ENCODE measurements at regions of chr19 and their contacts with region 1.

Region 1: DNA sequence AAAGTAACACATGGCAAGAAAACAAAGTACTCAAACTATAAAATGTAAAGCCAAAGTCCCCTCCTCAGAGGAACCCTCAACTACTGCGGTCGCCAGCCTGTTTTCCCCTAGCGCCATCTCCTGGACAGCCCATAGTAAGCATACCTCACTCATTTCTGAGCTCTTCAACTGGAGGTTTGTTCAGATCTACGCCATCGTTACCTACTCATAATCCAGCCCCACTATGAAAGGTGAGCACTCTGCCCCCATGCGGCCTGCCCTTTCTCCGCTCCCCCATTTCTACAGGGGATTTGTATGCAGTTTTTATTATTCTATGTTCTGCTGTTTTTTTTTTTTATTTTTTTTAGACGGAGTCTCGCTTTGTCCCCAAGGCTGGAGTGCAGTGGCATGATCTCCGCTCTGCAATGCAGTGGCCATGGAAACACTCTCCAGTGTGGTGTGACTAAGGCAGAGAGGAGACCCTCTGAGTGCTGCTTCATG is 26.2 kb downstream of the OPA3 start:
- DNase-seq: peak; percentile 40 to 89
- ATAC-seq: peak; percentile 90 to 98 (median 93)
- H3K4me3 ChIP-seq: no peak overlapping the region
- H3K4me3 Mint-ChIP-seq: no peak overlapping the region
- H3K27ac ChIP-seq: no peak overlapping the region
- H3K27ac Mint-ChIP-seq: no peak overlapping the region
- H3K4me1 ChIP-seq: peaks cover 18% of the 10 kb centered on the region
- H3K4me1 Mint-ChIP-seq: peaks cover 7 to 16% of the 10 kb centered on the region in 2 donors
- H3K27me3 ChIP-seq: no peaks in the 10 kb centered on the region
- H3K27me3 Mint-ChIP-seq: no peaks in the 10 kb centered on the region
- CTCF ChIP-seq: peak; percentile 52

Region 2: GRCh38 chr19:45496349-45496953 is 62.0 kb before region 1 on chr19:
- intact Hi-C with region 1: loop called (anchors 1 kb)
- DNase-seq: peak; percentile 53 to 69
- ATAC-seq: peak; percentile 32 to 50 (median 32)
- H3K4me3 ChIP-seq: peak overlapping the region; percentile 51
- H3K4me3 Mint-ChIP-seq: peak overlapping the region; percentile 75
- H3K27ac ChIP-seq: no peak overlapping the region
- H3K27ac Mint-ChIP-seq: peak overlapping the region in 1 of 2 donors; percentile 83
- H3K4me1 ChIP-seq: peaks cover 54% of the 10 kb centered on the region
- H3K4me1 Mint-ChIP-seq: peaks cover 34 to 58% of the 10 kb centered on the region in 2 donors
- H3K27me3 ChIP-seq: peaks cover 24% of the 10 kb centered on the region
- H3K27me3 Mint-ChIP-seq: peaks cover 10 to 34% of the 10 kb centered on the region in 2 donors
- CTCF ChIP-seq: no peak

Region 3: GRCh38 chr19:45523642-45524256 is 34.7 kb before region 1 on chr19:
- intact Hi-C with region 1: loop called (anchors 5 kb)
- DNase-seq: peak; percentile 70 to 90
- ATAC-seq: peak; percentile 99 to 100 (median 99)
- H3K4me3 ChIP-seq: no peak overlapping the region
- H3K4me3 Mint-ChIP-seq: no peak overlapping the region
- H3K27ac ChIP-seq: peak overlapping the region; percentile 13
- H3K27ac Mint-ChIP-seq: peak overlapping the region; percentile 75 to 78
- H3K4me1 ChIP-seq: peaks cover 19% of the 10 kb centered on the region
- H3K4me1 Mint-ChIP-seq: peaks cover 20 to 22% of the 10 kb centered on the region in 2 donors
- H3K27me3 ChIP-seq: no peaks in the 10 kb centered on the region
- H3K27me3 Mint-ChIP-seq: no peaks in the 10 kb centered on the region
- CTCF ChIP-seq: peak; percentile 75

Region 4: GRCh38 chr19:45574526-45574925 is 16.1 kb after region 1 on chr19:
- intact Hi-C with region 1: no loop called
- DNase-seq: no peak
- ATAC-seq: no peak
- H3K4me3 ChIP-seq: no peak overlapping the region
- H3K4me3 Mint-ChIP-seq: no peak overlapping the region
- H3K27ac ChIP-seq: no peak overlapping the region
- H3K27ac Mint-ChIP-seq: no peak overlapping the region
- H3K4me1 ChIP-seq: no peaks in the 10 kb centered on the region
- H3K4me1 Mint-ChIP-seq: peaks cover 7 to 14% of the 10 kb centered on the region in 2 donors
- H3K27me3 ChIP-seq: no peaks in the 10 kb centered on the region
- H3K27me3 Mint-ChIP-seq: no peaks in the 10 kb centered on the region
- CTCF ChIP-seq: no peak

Region 5: GRCh38 chr19:45584332-45585157 is 26.1 kb after region 1 on chr19 and contains the start of gene OPA3:
- intact Hi-C with region 1: no loop called
- DNase-seq: peak; percentile 98 to 100
- ATAC-seq: peak; percentile 84 to 95 (median 84)
- H3K4me3 ChIP-seq: peak within 1 kb of the TSS; percentile 77
- H3K4me3 Mint-ChIP-seq: peak within 1 kb of the TSS; percentile 89
- H3K27ac ChIP-seq: peak within 1 kb of the TSS; percentile 96
- H3K27ac Mint-ChIP-seq: peak within 1 kb of the TSS; percentile 95 to 96
- H3K4me1 ChIP-seq: peaks cover 16% of the 10 kb centered on the region
- H3K4me1 Mint-ChIP-seq: peaks cover 14 to 33% of the 10 kb centered on the region in 2 donors
- H3K27me3 ChIP-seq: no peaks in the 10 kb centered on the region
- H3K27me3 Mint-ChIP-seq: peaks cover 4 to 6% of the 10 kb centered on the region in 2 donors
- CTCF ChIP-seq: no peak
- total RNA-seq, gene OPA3: 8.2 to 10.4 (median 9.0) TPM

Region 6: GRCh38 chr19:45767793-45768654 is 209.6 kb after region 1 on chr19:
- intact Hi-C with region 1: no loop called
- DNase-seq: peak in 1 of 2 donors; percentile 40
- ATAC-seq: no peak
- H3K4me3 ChIP-seq: peak overlapping the region; percentile 30
- H3K4me3 Mint-ChIP-seq: peak overlapping the region; percentile 81
- H3K27ac ChIP-seq: no peak overlapping the region
- H3K27ac Mint-ChIP-seq: peak overlapping the region in 1 of 2 donors; percentile 91
- H3K4me1 ChIP-seq: peaks cover 31% of the 10 kb centered on the region
- H3K4me1 Mint-ChIP-seq: peaks cover 5 to 28% of the 10 kb centered on the region in 2 donors
- H3K27me3 ChIP-seq: peaks cover 11% of the 10 kb centered on the region
- H3K27me3 Mint-ChIP-seq: peaks cover 0 to 7% of the 10 kb centered on the region in 2 donors
- CTCF ChIP-seq: no peak

Region 7: GRCh38 chr19:45865269-45865948 is 307.0 kb after region 1 on chr19:
- intact Hi-C with region 1: no loop called
- DNase-seq: no peak
- ATAC-seq: no peak
- H3K4me3 ChIP-seq: no peak overlapping the region
- H3K4me3 Mint-ChIP-seq: no peak overlapping the region
- H3K27ac ChIP-seq: no peak overlapping the region
- H3K27ac Mint-ChIP-seq: no peak overlapping the region
- H3K4me1 ChIP-seq: peaks cover 24% of the 10 kb centered on the region
- H3K4me1 Mint-ChIP-seq: peaks cover 21 to 32% of the 10 kb centered on the region in 2 donors
- H3K27me3 ChIP-seq: peaks cover 11% of the 10 kb centered on the region
- H3K27me3 Mint-ChIP-seq: peaks cover 16 to 24% of the 10 kb centered on the region in 2 donors
- CTCF ChIP-seq: no peak

Measured in natural killer cell (primary cell).